Caco-2 (cell line): ENCODE measurements at regions of chr4 and their contacts with region 1.

Region 1: DNA sequence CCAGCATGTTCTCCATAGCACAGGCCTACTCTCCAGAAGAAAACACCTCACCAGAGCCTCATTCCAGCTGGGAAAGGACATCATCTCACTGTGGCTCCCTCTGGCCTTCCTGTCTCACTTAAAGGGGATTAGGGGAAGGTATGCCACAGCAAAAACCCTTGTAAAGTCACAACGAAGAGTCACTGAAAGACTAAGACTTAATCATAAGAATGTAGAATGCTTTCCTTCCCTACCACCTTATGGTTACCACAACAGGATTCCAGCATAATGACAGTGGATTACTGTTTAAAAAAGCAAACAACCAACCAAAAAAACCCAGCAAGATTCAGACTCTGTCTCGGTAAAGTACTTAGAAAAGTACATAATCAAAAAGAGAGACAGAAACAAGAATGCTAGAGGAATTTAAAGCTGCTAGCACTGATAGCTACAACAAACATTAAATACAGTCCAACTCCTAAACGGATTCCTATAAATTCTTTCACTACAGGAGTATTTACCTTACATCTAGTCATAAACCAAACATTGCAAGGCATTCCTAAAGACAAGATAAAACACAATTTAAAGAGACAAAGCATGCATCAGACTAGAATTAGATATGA is 75.1 kb downstream of the BANK1 start:
- DNase-seq: peak; percentile 71 to 78
- H3K4me3 ChIP-seq: no peak overlapping the region
- H3K4me3 Mint-ChIP-seq: peak overlapping the region; percentile 67
- H3K27ac Mint-ChIP-seq: peak overlapping the region; percentile 100
- H3K4me1 ChIP-seq: peaks cover 29% of the 10 kb centered on the region
- H3K4me1 Mint-ChIP-seq: peaks cover 26% of the 10 kb centered on the region
- H3K27me3 ChIP-seq: no peaks in the 10 kb centered on the region
- H3K27me3 Mint-ChIP-seq: no peaks in the 10 kb centered on the region
- CTCF ChIP-seq: no peak

Region 2: GRCh38 chr4:101790521-101791188 is 74.9 kb before region 1 on chr4 and contains the start of gene BANK1:
- CTCF ChIA-PET with region 1: no interaction called
- POLR2A ChIA-PET with region 1: no interaction called
- intact Hi-C with region 1: loop called (anchors 1 kb)
- DNase-seq: peak; percentile 63 to 84
- H3K4me3 ChIP-seq: peak within 1 kb of the TSS; percentile 58
- H3K4me3 Mint-ChIP-seq: peak within 1 kb of the TSS; percentile 78
- H3K27ac Mint-ChIP-seq: peak within 1 kb of the TSS; percentile 80
- H3K4me1 ChIP-seq: 0 out of 2 replicates have a peak, but pooled peaks cover 4% of the 10 kb centered on the region
- H3K4me1 Mint-ChIP-seq: peaks cover 1% of the 10 kb centered on the region
- H3K27me3 ChIP-seq: no peaks in the 10 kb centered on the region
- H3K27me3 Mint-ChIP-seq: no peaks in the 10 kb centered on the region
- CTCF ChIP-seq: peak; percentile 23 to 70
- total RNA-seq, gene BANK1: 5.7 and 5.8 TPM in 2 replicates

Region 3: DNA sequence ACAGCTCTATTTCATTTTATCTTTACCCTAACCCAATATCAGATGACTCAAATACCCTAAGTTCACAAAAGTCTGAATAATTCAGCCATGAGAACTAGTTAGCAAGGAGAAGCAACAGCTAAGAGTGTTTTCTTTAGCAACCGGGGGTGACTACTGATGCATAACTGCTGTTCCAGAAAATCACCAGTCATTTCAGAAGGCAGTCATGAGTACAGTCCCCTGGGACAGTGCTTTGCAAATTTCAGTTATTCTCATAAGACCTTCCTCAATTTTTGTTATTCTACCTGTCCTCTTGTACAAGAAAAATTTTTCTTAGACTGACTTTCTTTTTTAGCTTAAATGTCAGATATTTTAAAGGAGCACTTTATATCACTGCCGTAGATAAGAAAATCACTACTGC is 58.7 kb before region 1 on chr4:
- CTCF ChIA-PET with region 1: no interaction called
- POLR2A ChIA-PET with region 1: no interaction called
- intact Hi-C with region 1: no loop called
- DNase-seq: no peak
- H3K4me3 ChIP-seq: no peak overlapping the region
- H3K4me3 Mint-ChIP-seq: no peak overlapping the region
- H3K27ac Mint-ChIP-seq: no peak overlapping the region
- H3K4me1 ChIP-seq: no peaks in the 10 kb centered on the region
- H3K4me1 Mint-ChIP-seq: no peaks in the 10 kb centered on the region
- H3K27me3 ChIP-seq: no peaks in the 10 kb centered on the region
- H3K27me3 Mint-ChIP-seq: no peaks in the 10 kb centered on the region
- CTCF ChIP-seq: no peak

Region 4: GRCh38 chr4:101835121-101835904 is 30.3 kb before region 1 on chr4:
- CTCF ChIA-PET with region 1: no interaction called
- POLR2A ChIA-PET with region 1: no interaction called
- intact Hi-C with region 1: loop called (anchors 2 kb)
- DNase-seq: no peak
- H3K4me3 ChIP-seq: no peak overlapping the region
- H3K4me3 Mint-ChIP-seq: no peak overlapping the region
- H3K27ac Mint-ChIP-seq: no peak overlapping the region
- H3K4me1 ChIP-seq: 0 out of 2 replicates have a peak, but pooled peaks cover 6% of the 10 kb centered on the region
- H3K4me1 Mint-ChIP-seq: peaks cover 14% of the 10 kb centered on the region
- H3K27me3 ChIP-seq: no peaks in the 10 kb centered on the region
- H3K27me3 Mint-ChIP-seq: no peaks in the 10 kb centered on the region
- CTCF ChIP-seq: no peak

Region 5: GRCh38 chr4:101885558-101885957 is 20.0 kb after region 1 on chr4:
- CTCF ChIA-PET with region 1: no interaction called
- POLR2A ChIA-PET with region 1: no interaction called
- intact Hi-C with region 1: loop called (anchors 1 kb)
- DNase-seq: peak; percentile 50 to 71
- H3K4me3 ChIP-seq: no peak overlapping the region
- H3K4me3 Mint-ChIP-seq: peak overlapping the region; percentile 20
- H3K27ac Mint-ChIP-seq: peak overlapping the region; percentile 87
- H3K4me1 ChIP-seq: peaks cover 17% of the 10 kb centered on the region
- H3K4me1 Mint-ChIP-seq: peaks cover 15% of the 10 kb centered on the region
- H3K27me3 ChIP-seq: no peaks in the 10 kb centered on the region
- H3K27me3 Mint-ChIP-seq: no peaks in the 10 kb centered on the region
- CTCF ChIP-seq: no peak

Region 6: DNA sequence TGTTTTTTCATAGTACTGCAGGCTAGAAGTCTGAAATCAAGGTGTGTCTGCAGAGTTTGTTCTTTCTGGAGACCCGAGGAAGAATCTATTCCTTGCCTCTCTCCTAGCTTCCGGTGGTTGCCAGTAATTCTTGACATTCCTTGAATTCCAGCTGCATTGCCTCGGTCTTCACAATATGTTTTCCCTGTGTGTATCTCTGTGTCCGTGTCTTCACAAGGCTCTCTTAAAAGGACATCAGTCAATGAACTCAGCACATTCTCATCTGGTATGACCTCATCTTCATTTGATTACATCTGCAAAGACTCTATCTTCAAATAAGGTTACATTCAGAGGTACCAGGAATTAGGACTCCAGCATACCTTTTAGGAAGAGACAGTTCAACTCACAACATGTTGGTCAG is 88.3 kb after region 1 on chr4:
- CTCF ChIA-PET with region 1: no interaction called
- POLR2A ChIA-PET with region 1: interaction called, 5 read pairs
- intact Hi-C with region 1: loop called (anchors 1 kb)
- DNase-seq: peak; percentile 52 to 65
- H3K4me3 ChIP-seq: no peak overlapping the region
- H3K4me3 Mint-ChIP-seq: peak overlapping the region; percentile 50
- H3K27ac Mint-ChIP-seq: peak overlapping the region; percentile 96
- H3K4me1 ChIP-seq: peaks cover 43% of the 10 kb centered on the region
- H3K4me1 Mint-ChIP-seq: peaks cover 19% of the 10 kb centered on the region
- H3K27me3 ChIP-seq: no peaks in the 10 kb centered on the region
- H3K27me3 Mint-ChIP-seq: no peaks in the 10 kb centered on the region
- CTCF ChIP-seq: no peak

Region 7: GRCh38 chr4:101972791-101973190 is 107.2 kb after region 1 on chr4:
- CTCF ChIA-PET with region 1: no interaction called
- POLR2A ChIA-PET with region 1: no interaction called
- intact Hi-C with region 1: loop called (anchors 1 kb)
- DNase-seq: no peak
- H3K4me3 ChIP-seq: no peak overlapping the region
- H3K4me3 Mint-ChIP-seq: no peak overlapping the region
- H3K27ac Mint-ChIP-seq: no peak overlapping the region
- H3K4me1 ChIP-seq: peaks cover 19% of the 10 kb centered on the region; the same call in 1 of the 2 replicates
- H3K4me1 Mint-ChIP-seq: peaks cover 26% of the 10 kb centered on the region
- H3K27me3 ChIP-seq: no peaks in the 10 kb centered on the region
- H3K27me3 Mint-ChIP-seq: no peaks in the 10 kb centered on the region
- CTCF ChIP-seq: no peak